ENCODE measurements at regions of chr3 and their contacts with region 1.

Region 1: DNA sequence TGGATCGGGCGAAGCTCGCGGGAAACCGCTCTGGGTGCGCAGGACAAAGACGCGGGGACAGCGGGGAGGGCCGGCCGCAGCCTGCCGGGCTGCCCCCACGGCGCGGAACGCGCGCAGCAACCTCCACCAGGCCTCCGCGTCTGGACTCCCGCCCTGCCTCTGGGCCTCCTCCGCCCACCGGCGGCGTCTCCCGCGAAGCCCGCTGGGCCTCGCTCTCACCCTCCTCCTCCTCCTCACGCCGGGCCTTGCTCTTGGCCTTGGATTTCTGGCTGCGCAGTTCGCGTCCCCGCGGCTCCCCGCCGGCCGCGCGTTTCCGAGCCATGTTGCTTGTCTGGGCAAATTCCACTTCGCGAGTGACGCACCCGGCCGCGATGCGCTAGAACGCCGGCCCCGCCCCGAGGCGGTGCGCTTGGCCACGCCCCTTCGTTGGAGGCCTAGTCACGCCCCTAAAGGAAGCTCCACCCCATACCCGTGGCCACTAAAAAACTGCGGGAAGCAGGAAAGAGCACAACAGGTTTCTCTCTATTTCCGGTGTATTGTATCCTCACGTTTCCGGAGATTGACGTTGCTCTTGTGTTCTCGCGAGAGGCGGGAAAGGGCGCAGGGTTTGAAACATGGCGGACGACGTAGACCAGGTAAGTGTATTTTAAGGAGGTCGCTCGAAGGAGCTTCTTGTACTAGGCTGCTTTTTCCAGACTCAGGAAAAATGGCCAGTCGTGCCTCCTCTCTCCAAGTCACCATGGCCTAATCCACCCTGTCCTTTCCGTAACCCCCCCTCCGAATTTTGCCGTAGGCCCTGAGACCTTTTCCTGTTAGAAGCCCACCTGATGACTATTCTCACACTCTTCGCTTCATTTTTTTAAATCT is at the starts of genes LSM3 and XPC:
- DNase-seq: peak; percentile 97 to 99 (median 98)
- ATAC-seq: peak; percentile 99 to 100 (median 99)
- H3K4me3 ChIP-seq: peak within 1 kb of the TSS; percentile 74 to 89 (median 84)
- H3K27ac ChIP-seq: peak within 1 kb of the TSS; percentile 86 to 93 (median 88)
- H3K4me1 ChIP-seq: peaks cover 0 to 37% (median 7%) of the 10 kb centered on the region in 4 donors
- H3K27me3 ChIP-seq: no peaks in the 10 kb centered on the region
- CTCF ChIP-seq: no peak
- POLR2A ChIP-seq: peak; percentile 97
- total RNA-seq, gene LSM3: 4.5 to 7.4 (median 6.1) TPM
- total RNA-seq, gene XPC: 14.4 to 23.1 (median 20.0) TPM

Region 2: GRCh38 chr3:13895155-13896105 is 283.1 kb before region 1 on chr3:
- intact Hi-C with region 1: loop called in 1 of 2 experiments (anchors 10 kb)
- DNase-seq: peak; percentile 93 to 95 (median 95)
- ATAC-seq: peak; percentile 97 to 98 (median 98)
- H3K4me3 ChIP-seq: peak overlapping the region; percentile 41 to 73 (median 58)
- H3K27ac ChIP-seq: peak overlapping the region in 2 of 3 donors; percentile 1 to 2
- H3K4me1 ChIP-seq: peaks cover 0 to 8% (median 2%) of the 10 kb centered on the region in 4 donors
- H3K27me3 ChIP-seq: no peaks in the 10 kb centered on the region
- CTCF ChIP-seq: no peak
- POLR2A ChIP-seq: peak; percentile 61

Region 3: DNA sequence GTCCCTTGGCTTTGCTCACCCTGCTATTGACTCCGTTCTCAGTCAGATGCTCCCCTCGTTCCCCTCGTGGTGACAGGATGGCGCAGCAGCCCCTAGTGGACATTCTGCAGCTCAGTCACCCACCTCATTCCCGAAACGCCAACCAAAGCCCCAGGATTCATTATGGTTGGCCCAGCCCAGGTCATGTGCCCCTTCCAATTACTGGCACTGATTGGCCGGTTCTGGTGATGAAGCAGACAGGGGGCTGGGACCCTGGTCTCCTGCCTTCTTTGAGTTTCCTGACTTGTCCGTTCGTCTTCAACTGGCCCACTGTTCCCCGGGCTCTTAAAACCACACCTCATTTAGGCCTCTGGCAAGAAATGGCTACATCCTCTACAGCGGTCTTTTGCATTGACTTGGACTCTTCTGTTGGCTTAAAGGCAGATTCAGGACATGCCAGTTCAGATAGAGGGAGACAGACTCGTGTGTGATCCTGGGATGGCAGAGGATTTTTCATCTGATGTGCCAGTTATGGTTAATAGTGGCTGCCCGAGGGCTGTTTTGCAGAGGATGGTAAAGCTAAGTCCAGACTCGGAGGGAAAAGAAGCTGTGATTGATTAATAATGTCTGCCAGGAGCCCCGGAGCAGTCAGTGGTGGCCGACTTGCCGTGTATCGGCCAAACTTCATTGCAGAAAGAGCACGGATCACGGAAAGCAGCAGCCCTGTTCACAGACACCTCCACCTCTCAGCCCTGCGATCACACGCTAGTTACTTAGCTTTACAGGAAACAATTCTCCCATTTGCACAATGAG is 38.0 kb after region 1 on chr3:
- intact Hi-C with region 1: no loop called
- DNase-seq: peak in 1 of 3 donors; percentile 33
- ATAC-seq: peak; percentile 27 to 81 (median 58)
- H3K4me3 ChIP-seq: no peak overlapping the region
- H3K27ac ChIP-seq: no peak overlapping the region
- H3K4me1 ChIP-seq: no peaks in the 10 kb centered on the region
- H3K27me3 ChIP-seq: no peaks in the 10 kb centered on the region
- CTCF ChIP-seq: no peak
- POLR2A ChIP-seq: no peak

Measured in right lobe of liver (tissue), 6 donors.